ENCODE measurements at regions of chr2 and their contacts with region 1.

Region 1: DNA sequence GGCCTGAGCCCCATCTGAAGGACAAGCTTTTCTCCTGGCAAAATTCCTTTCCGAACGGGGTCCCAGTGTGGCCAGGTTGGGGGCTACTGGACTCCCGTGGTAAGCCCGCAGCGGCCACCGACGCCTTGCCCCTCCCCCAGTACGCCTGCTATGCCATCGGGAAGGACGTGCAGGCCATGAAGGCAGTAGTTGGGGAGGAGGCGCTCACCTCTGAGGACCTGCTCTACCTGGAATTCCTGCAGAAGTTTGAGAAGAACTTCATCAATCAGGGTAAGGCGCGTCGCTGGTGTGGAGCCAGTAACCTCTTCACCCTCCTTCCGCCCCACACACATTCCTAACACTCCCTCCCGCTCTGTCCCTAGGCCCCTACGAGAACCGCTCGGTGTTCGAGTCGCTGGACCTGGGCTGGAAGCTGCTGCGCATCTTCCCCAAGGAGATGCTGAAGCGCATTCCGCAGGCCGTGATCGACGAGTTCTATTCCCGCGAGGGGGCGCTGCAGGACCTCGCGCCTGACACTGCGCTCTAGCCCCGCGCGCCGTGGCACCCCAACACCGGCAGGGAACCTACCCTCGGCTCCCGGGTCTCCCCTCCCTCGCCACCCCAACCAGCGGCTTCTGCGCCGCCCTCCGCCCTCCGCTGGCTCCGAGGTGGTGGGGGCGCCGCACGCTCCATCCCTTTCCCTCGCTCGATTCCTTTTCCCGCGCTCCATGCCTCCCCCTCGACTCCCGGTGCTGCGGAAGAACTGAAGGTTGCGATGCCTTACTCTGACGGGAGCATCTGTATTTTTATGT is 13.6 kb upstream of the ANKRD53 start:
- DNase-seq: peak; percentile 65
- H3K4me3 ChIP-seq: peak overlapping the region; percentile 57
- H3K27ac ChIP-seq: no peak overlapping the region
- H3K4me1 ChIP-seq: peaks cover 7% of the 10 kb centered on the region
- CTCF ChIP-seq: peak; percentile 86

Region 2: DNA sequence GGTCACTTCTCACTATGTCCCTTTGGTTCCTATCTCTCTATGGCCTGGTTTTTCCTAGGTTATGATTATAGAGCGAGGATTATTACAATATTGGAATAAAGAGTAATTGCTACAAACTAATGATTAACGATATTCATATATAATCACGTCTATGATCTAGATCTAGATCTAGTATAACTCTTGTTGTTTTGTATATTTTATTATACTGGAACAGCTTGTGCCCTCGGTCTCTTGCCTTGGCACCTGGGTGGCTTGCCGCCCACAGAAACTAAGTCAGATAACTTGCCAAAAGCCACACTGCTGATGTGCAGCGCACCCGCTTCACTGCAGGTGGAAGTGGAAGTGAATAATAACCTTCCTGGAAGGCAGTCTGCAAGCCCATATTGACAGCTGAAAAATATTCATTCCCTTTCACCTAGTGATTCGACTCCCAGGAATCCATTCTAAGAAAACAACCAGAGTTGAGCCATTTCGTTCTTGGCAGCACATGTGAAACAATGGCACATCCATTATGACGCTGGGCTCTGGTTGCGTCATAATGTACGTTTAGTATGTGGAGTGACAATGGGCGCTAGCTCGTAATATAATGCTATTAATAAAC is 12.9 kb after region 1 on chr2:
- CTCF ChIA-PET with region 1: no interaction called
- POLR2A ChIA-PET with region 1: no interaction called
- intact Hi-C with region 1: loop called (anchors 1 kb)
- DNase-seq: no peak
- H3K4me3 ChIP-seq: peak overlapping the region; percentile 47
- H3K27ac ChIP-seq: no peak overlapping the region
- H3K4me1 ChIP-seq: peaks cover 4% of the 10 kb centered on the region
- CTCF ChIP-seq: peak; percentile 62; the same call in 1 of the 2 replicates

Region 3: GRCh38 chr2:70994756-70995729 is 30.3 kb after region 1 on chr2 and contains the start of gene TEX261:
- CTCF ChIA-PET with region 1: no interaction called
- POLR2A ChIA-PET with region 1: no interaction called
- intact Hi-C with region 1: no loop called
- DNase-seq: peak; percentile 91
- H3K4me3 ChIP-seq: peak within 1 kb of the TSS; percentile 100
- H3K27ac ChIP-seq: peak within 1 kb of the TSS; percentile 69
- H3K4me1 ChIP-seq: peaks cover 19% of the 10 kb centered on the region
- CTCF ChIP-seq: peak; percentile 75
- total RNA-seq, gene TEX261: 26.7 and 34.5 TPM in 2 replicates

Measured in OCI-LY7 (cell line).